ENCODE measurements at regions of chr3 and their contacts with region 1.

Region 1: GRCh38 chr3:10738688-10739372 is 77.2 kb upstream of the SLC6A11 start:
- DNase-seq: peak; percentile 90
- ATAC-seq: peak; percentile 96
- H3K4me3 Mint-ChIP-seq: peak overlapping the region; percentile 60
- H3K27ac Mint-ChIP-seq: no peak overlapping the region
- H3K4me1 Mint-ChIP-seq: peaks cover 5% of the 10 kb centered on the region
- H3K27me3 Mint-ChIP-seq: peaks cover 28% of the 10 kb centered on the region
- CTCF ChIP-seq: peak; percentile 93

Region 2: GRCh38 chr3:10553591-10554235 is 185.1 kb before region 1 on chr3:
- CTCF ChIA-PET with region 1: interaction called, 10 read pairs
- POLR2A ChIA-PET with region 1: no interaction called
- DNase-seq: peak; percentile 49
- ATAC-seq: peak; percentile 89
- H3K4me3 Mint-ChIP-seq: no peak overlapping the region
- H3K27ac Mint-ChIP-seq: no peak overlapping the region
- H3K4me1 Mint-ChIP-seq: peaks cover 7% of the 10 kb centered on the region; the same call in 1 of the 2 replicates
- H3K27me3 Mint-ChIP-seq: no peaks in the 10 kb centered on the region
- CTCF ChIP-seq: no peak

Region 3: DNA sequence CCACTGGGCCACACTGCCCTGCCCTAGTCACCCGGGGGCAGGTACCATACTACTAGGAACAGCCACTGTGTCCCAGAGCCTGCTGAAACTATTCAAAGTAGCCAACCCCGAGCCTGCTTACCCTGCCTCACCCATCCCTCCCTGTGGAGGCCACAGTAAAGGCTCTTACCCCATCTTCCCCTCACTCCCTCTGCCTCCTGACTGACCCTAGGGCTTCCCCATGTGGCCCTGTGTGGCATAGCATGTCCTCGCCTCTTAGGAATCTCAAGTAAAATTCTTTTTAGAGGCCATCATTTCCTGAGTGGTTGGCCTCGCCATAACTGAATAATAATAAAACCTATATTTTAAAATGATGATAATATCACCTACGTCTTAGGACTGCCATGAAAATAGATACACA is 35.0 kb before region 1 on chr3:
- CTCF ChIA-PET with region 1: interaction called, 17 read pairs
- POLR2A ChIA-PET with region 1: no interaction called
- DNase-seq: peak; percentile 70
- ATAC-seq: peak; percentile 73
- H3K4me3 Mint-ChIP-seq: no peak overlapping the region
- H3K27ac Mint-ChIP-seq: no peak overlapping the region
- H3K4me1 Mint-ChIP-seq: peaks cover 24% of the 10 kb centered on the region
- H3K27me3 Mint-ChIP-seq: peaks cover 70% of the 10 kb centered on the region
- CTCF ChIP-seq: peak; percentile 38; the same call in 1 of the 2 replicates

Region 4: DNA sequence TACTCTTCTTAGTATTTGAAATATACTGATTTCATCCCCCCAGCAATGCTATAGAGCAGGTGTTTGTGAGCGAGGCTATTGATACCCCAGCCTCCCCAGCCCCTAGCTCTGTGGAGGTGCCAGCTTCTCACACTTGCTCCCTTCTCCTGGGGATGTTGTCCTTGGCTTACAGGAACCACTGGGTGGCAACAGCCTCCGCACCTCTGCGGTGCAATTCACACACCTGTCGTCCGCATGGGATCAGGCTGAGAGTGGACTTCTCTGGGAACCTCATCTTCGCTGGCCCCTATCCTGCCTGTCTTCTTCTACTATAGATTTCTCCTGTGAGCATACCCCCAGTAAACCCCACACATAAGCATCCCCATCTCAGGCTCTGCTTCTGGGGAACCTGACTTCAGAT is 26.7 kb before region 1 on chr3:
- CTCF ChIA-PET with region 1: interaction called, 17 read pairs
- POLR2A ChIA-PET with region 1: interaction called, 3 read pairs
- DNase-seq: no peak
- ATAC-seq: no peak
- H3K4me3 Mint-ChIP-seq: no peak overlapping the region
- H3K27ac Mint-ChIP-seq: no peak overlapping the region
- H3K4me1 Mint-ChIP-seq: peaks cover 1% of the 10 kb centered on the region
- H3K27me3 Mint-ChIP-seq: peaks cover 59% of the 10 kb centered on the region
- CTCF ChIP-seq: no peak

Region 5: DNA sequence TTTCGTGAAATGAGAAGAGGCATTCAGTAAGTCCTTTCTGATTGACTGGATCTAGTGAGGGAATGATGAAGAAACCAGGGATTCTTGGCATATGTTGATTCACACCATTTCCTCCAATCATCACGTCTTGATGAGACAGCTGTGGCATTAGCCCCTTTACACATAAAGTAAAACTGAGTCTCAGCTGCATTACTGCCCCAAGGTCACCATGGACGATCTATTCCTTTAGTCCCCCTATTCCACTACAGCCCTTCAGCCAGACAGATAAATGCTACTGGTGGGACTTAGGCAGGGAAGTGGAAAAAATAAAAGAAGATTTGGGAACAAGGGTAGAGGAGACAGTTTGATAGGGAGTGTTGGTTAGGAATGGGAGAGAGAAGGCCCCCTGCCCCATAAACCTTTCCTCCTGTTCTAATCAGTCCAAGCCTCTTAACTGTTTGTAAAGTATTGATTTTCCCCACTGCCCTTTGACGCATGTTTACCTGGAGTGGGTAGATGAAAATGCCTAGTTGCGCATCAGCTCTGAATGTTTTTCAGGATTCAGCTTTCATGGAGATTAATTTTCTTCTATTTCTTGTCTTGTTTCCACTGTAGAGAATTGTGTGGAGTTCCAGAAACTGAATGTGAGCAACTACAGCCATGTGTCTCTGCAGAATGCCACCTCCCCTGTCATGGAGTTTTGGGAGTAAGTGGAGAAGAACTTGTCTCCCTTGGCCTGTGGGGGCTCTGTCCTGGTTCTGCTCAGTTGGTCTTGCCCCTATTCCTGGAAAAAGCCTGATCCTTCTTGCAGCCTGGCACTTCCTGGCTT is 84.1 kb after region 1 on chr3:
- CTCF ChIA-PET with region 1: no interaction called
- POLR2A ChIA-PET with region 1: no interaction called
- DNase-seq: no peak
- ATAC-seq: no peak
- H3K4me3 Mint-ChIP-seq: no peak overlapping the region
- H3K27ac Mint-ChIP-seq: no peak overlapping the region
- H3K4me1 Mint-ChIP-seq: no peaks in the 10 kb centered on the region
- H3K27me3 Mint-ChIP-seq: peaks cover 14% of the 10 kb centered on the region
- CTCF ChIP-seq: no peak

Region 6: DNA sequence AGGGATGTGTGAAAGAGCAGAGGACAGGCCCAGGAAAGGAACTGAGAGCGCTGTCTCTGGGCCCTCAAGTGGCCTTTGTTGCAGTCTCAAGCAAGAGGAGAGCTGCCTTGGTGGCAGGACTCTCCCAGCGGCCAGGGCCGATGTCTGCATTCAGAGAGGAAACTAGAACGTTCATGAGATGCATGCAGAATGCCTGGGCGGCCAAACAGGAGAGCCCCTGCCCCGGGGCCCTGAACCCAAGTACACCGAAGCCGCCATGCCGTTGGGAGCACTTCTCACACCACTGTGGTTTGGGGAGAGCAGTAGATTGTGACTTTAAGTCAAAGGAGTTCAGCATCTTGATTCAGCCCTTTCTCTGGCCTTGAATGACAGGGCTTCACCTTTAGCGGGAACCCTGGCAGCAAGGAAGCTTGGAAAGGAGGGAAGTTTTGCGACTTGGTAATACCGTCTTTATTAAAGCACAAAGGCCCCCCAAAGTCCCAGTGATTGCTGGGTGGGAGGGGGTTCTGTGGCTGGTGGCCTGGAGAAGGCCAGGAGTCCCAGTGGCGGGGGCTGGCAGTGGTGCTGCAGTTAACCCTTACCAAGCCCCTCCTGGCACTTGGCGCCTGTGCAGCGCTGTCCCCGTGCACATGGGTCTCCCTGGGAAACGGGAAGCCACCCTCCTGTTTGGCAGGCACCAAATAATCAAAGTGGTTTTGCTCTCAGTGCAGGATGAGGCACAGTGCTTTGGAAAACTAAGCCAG is 113.4 kb after region 1 on chr3:
- CTCF ChIA-PET with region 1: no interaction called
- POLR2A ChIA-PET with region 1: no interaction called
- DNase-seq: no peak
- ATAC-seq: no peak
- H3K4me3 Mint-ChIP-seq: no peak overlapping the region
- H3K27ac Mint-ChIP-seq: no peak overlapping the region
- H3K4me1 Mint-ChIP-seq: no peaks in the 10 kb centered on the region
- H3K27me3 Mint-ChIP-seq: peaks cover 21% of the 10 kb centered on the region
- CTCF ChIP-seq: no peak

Measured in WTC11 (cell line).